Ovary (tissue), 10 donors: ENCODE measurements at regions of chr12 and their contacts with region 1.

Region 1: GRCh38 chr12:54958048-54958658 is 26.4 kb downstream of the TESPA1 start:
- DNase-seq: peak in 3 of 5 donors; percentile 16 to 35 (median 25)
- H3K4me3 ChIP-seq: no peak overlapping the region
- H3K27ac ChIP-seq: no peak overlapping the region
- H3K4me1 ChIP-seq: peaks cover 4% of the 10 kb centered on the region
- H3K27me3 ChIP-seq: no peaks in the 10 kb centered on the region
- CTCF ChIP-seq: peak; percentile 38 to 59 (median 52)
- EP300 ChIP-seq: no peak
- POLR2A ChIP-seq: no peak

Region 2: GRCh38 chr12:54579696-54580333 is 378.3 kb before region 1 on chr12:
- intact Hi-C with region 1: loop called in 2 of 4 experiments (anchors 10 kb)
- DNase-seq: peak; percentile 79 to 94 (median 90)
- H3K4me3 ChIP-seq: no peak overlapping the region
- H3K27ac ChIP-seq: peak overlapping the region in 1 of 2 donors; percentile 16
- H3K4me1 ChIP-seq: peaks cover 1% of the 10 kb centered on the region
- H3K27me3 ChIP-seq: no peaks in the 10 kb centered on the region
- CTCF ChIP-seq: peak; percentile 95 to 97 (median 95)
- EP300 ChIP-seq: no peak
- POLR2A ChIP-seq: no peak

Region 3: GRCh38 chr12:54749191-54749818 is 208.8 kb before region 1 on chr12:
- intact Hi-C with region 1: loop called in 2 of 4 experiments (anchors 10 kb)
- DNase-seq: no peak
- H3K4me3 ChIP-seq: no peak overlapping the region
- H3K27ac ChIP-seq: no peak overlapping the region
- H3K4me1 ChIP-seq: no peaks in the 10 kb centered on the region
- H3K27me3 ChIP-seq: no peaks in the 10 kb centered on the region
- CTCF ChIP-seq: peak; percentile 34 to 58 (median 37)
- EP300 ChIP-seq: no peak
- POLR2A ChIP-seq: no peak

Region 4: DNA sequence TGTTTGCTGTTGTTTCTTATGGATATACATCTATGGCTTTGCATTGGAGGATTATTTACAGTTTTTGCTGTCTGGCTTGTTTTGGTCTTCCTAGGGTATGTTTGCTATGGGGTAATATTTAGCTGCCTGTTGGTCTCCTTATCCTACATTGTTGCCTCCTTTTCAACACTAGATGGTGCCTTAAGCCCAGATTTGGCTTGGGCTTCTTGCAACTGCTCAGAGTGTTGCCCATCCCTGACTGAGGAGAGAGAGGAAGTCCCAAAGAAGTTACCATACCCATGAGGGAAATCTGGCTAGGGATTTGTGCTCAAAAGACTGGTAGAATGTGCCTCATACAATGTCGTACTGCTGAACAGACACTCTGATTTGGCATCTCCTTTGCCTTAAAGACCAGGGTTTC is 198.4 kb before region 1 on chr12:
- intact Hi-C with region 1: loop called in 1 of 4 experiments (anchors 10 kb)
- DNase-seq: no peak
- H3K4me3 ChIP-seq: no peak overlapping the region
- H3K27ac ChIP-seq: no peak overlapping the region
- H3K4me1 ChIP-seq: no peaks in the 10 kb centered on the region
- H3K27me3 ChIP-seq: no peaks in the 10 kb centered on the region
- CTCF ChIP-seq: no peak
- EP300 ChIP-seq: no peak
- POLR2A ChIP-seq: no peak

Region 5: GRCh38 chr12:54853995-54854566 is 104.1 kb before region 1 on chr12 and contains the start of gene MUCL1:
- intact Hi-C with region 1: loop called in 1 of 4 experiments (anchors 10 kb)
- DNase-seq: no peak
- H3K4me3 ChIP-seq: no peak within 1 kb of the TSS
- H3K27ac ChIP-seq: no peak within 1 kb of the TSS
- H3K4me1 ChIP-seq: no peaks in the 10 kb centered on the region
- H3K27me3 ChIP-seq: no peaks in the 10 kb centered on the region
- CTCF ChIP-seq: no peak
- EP300 ChIP-seq: no peak
- POLR2A ChIP-seq: no peak
- total RNA-seq, gene MUCL1: 0.75 to 1.1 (median 0.81) TPM in 3 of 7 donors, not detected in the others